Posterior vena cava (tissue), 2 donors: ENCODE measurements at regions of chr4 and their contacts with region 1.

Region 1: GRCh38 chr4:79442422-79442821 is 34.4 kb upstream of the GK2 start:
- DNase-seq: no peak

Region 2: DNA sequence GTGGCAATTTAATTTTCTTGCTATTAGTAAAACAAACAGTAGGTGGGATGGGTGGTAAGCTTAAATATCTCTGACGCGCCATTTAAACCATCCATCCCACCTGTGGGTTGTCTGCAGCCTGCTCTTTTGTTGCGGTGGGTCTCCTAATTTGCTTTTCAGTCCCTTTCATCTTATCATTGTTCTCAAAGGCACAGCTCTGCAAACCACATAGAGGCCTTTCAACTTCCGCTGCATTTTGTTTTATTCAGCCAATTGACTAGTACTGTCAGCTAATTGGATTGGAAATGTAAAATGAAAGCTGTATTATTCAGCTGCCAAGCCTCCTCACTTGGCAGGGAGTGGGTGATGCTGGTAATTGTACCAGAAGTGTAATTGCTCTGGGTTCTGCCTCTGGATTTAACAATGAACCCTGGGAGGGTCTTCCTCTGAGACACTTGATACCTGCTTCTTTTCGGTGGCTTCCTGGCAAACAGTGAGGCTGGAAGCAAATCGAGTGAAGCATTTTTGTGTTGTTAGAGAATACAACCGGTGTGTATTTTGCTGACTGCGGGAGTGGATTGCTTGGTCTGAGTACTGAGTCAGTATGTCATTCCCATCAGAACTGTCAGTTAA is 1219.7 kb before region 1 on chr4:
- intact Hi-C with region 1: no loop called
- DNase-seq: no peak

Region 3: GRCh38 chr4:79476196-79476595 is 33.8 kb after region 1 on chr4:
- intact Hi-C with region 1: loop called in 1 of 2 experiments (anchors 2 kb)
- DNase-seq: peak; percentile 53